Gastrocnemius medialis (tissue), 4 donors: ENCODE measurements at regions of chr3 and their contacts with region 1.

Region 1: DNA sequence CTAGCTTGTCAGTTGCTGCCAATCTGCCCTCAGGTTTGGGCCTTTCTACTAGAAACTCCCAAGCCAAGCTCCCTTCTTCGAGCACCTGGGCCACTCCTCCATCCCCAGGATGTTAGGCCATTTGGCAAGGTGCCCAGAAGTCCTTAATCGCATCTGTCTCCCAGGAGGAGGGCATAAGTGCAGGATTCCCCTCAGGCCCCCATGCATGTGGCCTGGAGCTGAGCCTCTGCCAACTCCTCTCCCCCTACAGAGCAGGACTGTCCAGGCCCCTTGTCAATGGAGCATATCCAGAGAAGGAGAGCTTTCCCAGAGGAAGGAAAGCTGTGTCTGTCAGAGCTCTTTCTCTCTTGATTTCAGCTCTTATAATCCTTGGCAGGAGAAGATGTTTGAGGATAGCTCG is 182.6 kb upstream of the ROPN1 start:
- DNase-seq: no peak
- ATAC-seq: no peak
- H3K4me3 ChIP-seq: no peak overlapping the region
- H3K27ac ChIP-seq: no peak overlapping the region
- H3K4me1 ChIP-seq: peaks cover 0 to 5% of the 10 kb centered on the region in 2 donors
- H3K27me3 ChIP-seq: no peaks in the 10 kb centered on the region
- CTCF ChIP-seq: no peak
- POLR2A ChIP-seq: no peak

Region 2: GRCh38 chr3:123028233-123028828 is 1146.1 kb before region 1 on chr3:
- in situ Hi-C with region 1: no loop called
- intact Hi-C with region 1: no loop called
- DNase-seq: no peak
- ATAC-seq: peak; percentile 53 to 55
- H3K4me3 ChIP-seq: peak overlapping the region; percentile 57 to 66 (median 64)
- H3K27ac ChIP-seq: peak overlapping the region in 1 of 4 donors; percentile 32
- H3K4me1 ChIP-seq: peaks cover 16 to 23% of the 10 kb centered on the region in 2 donors
- H3K27me3 ChIP-seq: peaks cover 43 to 65% (median 48%) of the 10 kb centered on the region in 3 donors
- CTCF ChIP-seq: peak in 2 of 5 experiments; percentile 22 to 28
- POLR2A ChIP-seq: no peak

Region 3: GRCh38 chr3:124063197-124063909 is 111.1 kb before region 1 on chr3:
- in situ Hi-C with region 1: loop called in 1 of 4 experiments (anchors 25 kb)
- intact Hi-C with region 1: no loop called
- DNase-seq: no peak
- ATAC-seq: peak in 1 of 2 donors; percentile 16
- H3K4me3 ChIP-seq: no peak overlapping the region
- H3K27ac ChIP-seq: no peak overlapping the region
- H3K4me1 ChIP-seq: peaks cover 4 to 30% of the 10 kb centered on the region in 2 donors
- H3K27me3 ChIP-seq: no peaks in the 10 kb centered on the region
- CTCF ChIP-seq: no peak
- POLR2A ChIP-seq: no peak